ENCODE measurements at regions of chr6 and their contacts with region 1.

Region 1: DNA sequence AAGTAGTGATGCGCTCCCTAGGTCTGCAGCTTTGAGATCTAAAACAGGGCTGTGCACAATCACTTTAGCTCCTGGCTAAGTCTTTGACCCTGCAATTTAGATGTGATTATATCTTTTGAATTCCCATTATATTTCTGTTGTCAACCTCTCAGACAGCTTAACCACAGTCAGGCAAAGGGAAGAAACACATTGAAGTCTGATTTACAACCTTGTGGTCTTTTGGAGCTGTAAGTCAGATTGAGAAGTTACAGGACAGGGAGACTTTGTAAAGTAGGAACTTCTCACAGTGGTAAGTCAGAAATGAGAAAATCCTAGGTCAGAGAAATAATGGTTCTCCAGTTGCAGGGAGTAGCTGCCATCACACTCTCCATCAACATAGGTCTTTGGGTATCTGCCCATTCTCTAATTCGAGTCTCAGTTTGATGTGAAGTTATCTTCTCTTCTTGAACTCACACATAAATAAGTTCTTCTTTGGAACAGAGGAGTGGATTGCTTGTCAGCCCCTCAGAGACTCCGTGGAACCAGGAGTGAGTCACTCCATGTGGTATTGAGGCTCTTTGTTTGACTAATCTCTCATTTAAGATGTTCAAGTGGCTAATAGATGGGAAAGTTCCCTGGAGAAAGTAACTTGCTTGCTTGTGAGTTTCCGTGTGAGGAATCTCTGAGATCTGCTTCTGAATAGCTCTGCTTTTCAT is 35.0 kb upstream of the SGK1 start:
- DNase-seq: no peak
- H3K4me3 Mint-ChIP-seq: peak overlapping the region; percentile 81
- H3K27ac Mint-ChIP-seq: peak overlapping the region; percentile 91
- H3K4me1 Mint-ChIP-seq: peaks cover 31% of the 10 kb centered on the region
- H3K27me3 Mint-ChIP-seq: no peaks in the 10 kb centered on the region

Region 2: GRCh38 chr6:134211297-134211696 is 141.6 kb before region 1 on chr6:
- intact Hi-C with region 1: no loop called
- DNase-seq: no peak
- H3K4me3 Mint-ChIP-seq: no peak overlapping the region
- H3K27ac Mint-ChIP-seq: no peak overlapping the region
- H3K4me1 Mint-ChIP-seq: no peaks in the 10 kb centered on the region
- H3K27me3 Mint-ChIP-seq: no peaks in the 10 kb centered on the region

Region 3: GRCh38 chr6:134235937-134236751 is 116.8 kb before region 1 on chr6:
- intact Hi-C with region 1: loop called (anchors 5 kb)
- DNase-seq: peak; percentile 69
- H3K4me3 Mint-ChIP-seq: peak overlapping the region; percentile 51
- H3K27ac Mint-ChIP-seq: peak overlapping the region; percentile 88
- H3K4me1 Mint-ChIP-seq: peaks cover 40% of the 10 kb centered on the region
- H3K27me3 Mint-ChIP-seq: no peaks in the 10 kb centered on the region

Region 4: DNA sequence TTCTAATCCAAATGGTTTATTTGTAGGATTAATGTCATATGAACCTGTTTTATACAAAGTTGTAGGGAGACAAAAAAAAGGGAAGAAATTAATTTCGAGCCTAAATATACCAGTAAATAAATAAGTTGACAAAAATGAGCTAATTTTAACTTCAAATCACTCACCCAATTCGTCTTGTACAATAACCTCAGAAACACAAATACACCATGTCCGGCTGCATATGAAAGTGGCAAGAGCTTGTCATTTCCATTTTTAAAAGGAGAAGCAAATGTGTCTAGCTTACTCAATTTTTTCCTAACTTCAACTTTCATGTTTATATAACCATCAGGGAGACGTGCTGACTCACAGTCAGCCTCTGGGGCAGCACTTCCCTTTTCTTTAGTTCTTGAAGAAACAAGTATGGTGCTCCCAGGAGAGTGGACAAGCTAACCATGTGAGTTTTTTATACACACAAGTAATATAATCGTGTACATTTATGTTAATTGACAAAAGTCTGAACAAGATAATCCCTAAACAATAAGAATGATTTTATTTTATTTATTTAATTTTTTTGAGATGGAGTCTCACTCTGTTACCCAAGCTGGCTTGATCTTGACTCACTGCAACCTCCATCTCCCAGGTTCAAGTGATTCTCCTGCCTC is 20.5 kb after region 1 on chr6:
- intact Hi-C with region 1: loop called (anchors 2 kb)
- DNase-seq: peak; percentile 70
- H3K4me3 Mint-ChIP-seq: peak overlapping the region; percentile 27
- H3K27ac Mint-ChIP-seq: peak overlapping the region; percentile 73
- H3K4me1 Mint-ChIP-seq: peaks cover 36% of the 10 kb centered on the region
- H3K27me3 Mint-ChIP-seq: no peaks in the 10 kb centered on the region

Region 5: DNA sequence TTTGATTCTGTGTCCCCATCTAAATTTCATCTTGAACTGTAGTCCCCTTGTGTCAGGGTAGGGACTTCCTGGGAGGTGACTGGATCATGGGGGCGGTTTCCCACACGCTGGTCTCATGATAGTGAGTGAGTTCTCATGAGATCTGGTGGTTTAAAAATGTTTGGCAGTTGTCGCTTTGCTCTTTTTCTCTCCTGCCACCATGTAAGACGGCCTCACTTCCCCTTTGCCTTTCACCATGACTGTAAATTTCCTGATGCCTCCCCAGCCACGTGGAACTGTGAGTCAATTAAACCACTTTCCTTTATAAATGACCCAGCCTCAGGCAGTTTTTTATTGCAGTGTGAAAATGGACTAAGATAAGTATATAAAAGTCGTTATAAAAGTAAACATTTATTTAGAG is 45.5 kb after region 1 on chr6:
- intact Hi-C with region 1: no loop called
- DNase-seq: no peak
- H3K4me3 Mint-ChIP-seq: no peak overlapping the region
- H3K27ac Mint-ChIP-seq: peak overlapping the region; percentile 49
- H3K4me1 Mint-ChIP-seq: peaks cover 16% of the 10 kb centered on the region
- H3K27me3 Mint-ChIP-seq: no peaks in the 10 kb centered on the region